CD14-positive monocyte (primary cell): ENCODE measurements at regions of chr11 and their contacts with region 1.

Region 1: GRCh38 chr11:69888483-69889076 is 69.4 kb upstream of the FGF3 start:
- DNase-seq: peak; percentile 28 to 44 (median 33)
- H3K4me3 ChIP-seq: no peak overlapping the region
- H3K4me3 Mint-ChIP-seq: no peak overlapping the region
- H3K27ac ChIP-seq: no peak overlapping the region
- H3K27ac Mint-ChIP-seq: no peak overlapping the region
- H3K4me1 ChIP-seq: no peaks in the 10 kb centered on the region
- H3K4me1 Mint-ChIP-seq: no peaks in the 10 kb centered on the region
- H3K27me3 ChIP-seq: peaks cover 0 to 7% of the 10 kb centered on the region in 2 donors
- H3K27me3 Mint-ChIP-seq: peaks cover 18 to 42% (median 26%) of the 10 kb centered on the region in 3 donors
- CTCF ChIP-seq: peak; percentile 86

Region 2: DNA sequence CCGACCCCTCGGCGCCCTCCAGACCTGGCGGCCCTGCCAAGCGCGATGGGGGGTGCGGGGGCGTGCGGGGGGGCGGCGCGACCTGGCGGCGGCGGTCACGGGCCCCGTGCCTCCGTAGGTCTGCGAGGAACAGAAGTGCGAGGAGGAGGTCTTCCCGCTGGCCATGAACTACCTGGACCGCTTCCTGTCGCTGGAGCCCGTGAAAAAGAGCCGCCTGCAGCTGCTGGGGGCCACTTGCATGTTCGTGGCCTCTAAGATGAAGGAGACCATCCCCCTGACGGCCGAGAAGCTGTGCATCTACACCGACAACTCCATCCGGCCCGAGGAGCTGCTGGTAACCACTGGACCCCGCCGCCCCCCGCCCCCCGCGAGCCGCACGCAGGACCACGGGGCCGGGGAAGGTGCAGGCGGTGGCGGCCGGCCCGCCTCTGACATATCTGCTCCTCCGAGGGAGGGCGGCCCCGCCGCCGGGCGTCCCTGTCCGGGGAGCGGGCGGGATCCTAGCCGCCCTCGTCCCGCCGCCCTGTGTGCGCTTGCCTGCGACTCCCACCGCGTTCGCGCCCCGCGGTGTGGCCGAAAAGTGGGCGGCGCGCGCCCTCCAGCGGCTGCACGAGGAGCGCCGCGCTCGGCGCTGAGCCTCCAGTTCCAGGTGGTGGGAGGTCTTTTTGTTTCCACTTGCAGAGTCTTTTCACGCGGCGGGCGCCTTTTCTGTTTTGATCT is 245.5 kb before region 1 on chr11:
- intact Hi-C with region 1: loop called in 1 of 2 experiments (anchors 5 kb)
- DNase-seq: peak; percentile 51 to 63 (median 57)
- H3K4me3 ChIP-seq: peak overlapping the region; percentile 51 to 87 (median 53)
- H3K4me3 Mint-ChIP-seq: peak overlapping the region; percentile 77 to 84
- H3K27ac ChIP-seq: no peak overlapping the region
- H3K27ac Mint-ChIP-seq: no peak overlapping the region
- H3K4me1 ChIP-seq: peaks cover 31 to 41% of the 10 kb centered on the region in 2 donors
- H3K4me1 Mint-ChIP-seq: peaks cover 23% of the 10 kb centered on the region
- H3K27me3 ChIP-seq: peaks cover 25 to 55% of the 10 kb centered on the region in 2 donors
- H3K27me3 Mint-ChIP-seq: peaks cover 45 to 69% (median 45%) of the 10 kb centered on the region in 3 donors
- CTCF ChIP-seq: peak; percentile 97

Region 3: GRCh38 chr11:69683764-69684333 is 204.7 kb before region 1 on chr11:
- intact Hi-C with region 1: loop called in 1 of 2 experiments (anchors 1 kb)
- DNase-seq: no peak
- H3K4me3 ChIP-seq: no peak overlapping the region
- H3K4me3 Mint-ChIP-seq: no peak overlapping the region
- H3K27ac ChIP-seq: no peak overlapping the region
- H3K27ac Mint-ChIP-seq: no peak overlapping the region
- H3K4me1 ChIP-seq: peaks cover 3 to 4% of the 10 kb centered on the region in 2 donors
- H3K4me1 Mint-ChIP-seq: peaks cover 8% of the 10 kb centered on the region
- H3K27me3 ChIP-seq: peaks cover 4 to 21% of the 10 kb centered on the region in 2 donors
- H3K27me3 Mint-ChIP-seq: peaks cover 27 to 43% (median 35%) of the 10 kb centered on the region in 3 donors
- CTCF ChIP-seq: peak; percentile 10

Region 4: GRCh38 chr11:69692422-69692821 is 196.2 kb before region 1 on chr11:
- intact Hi-C with region 1: loop called in 1 of 2 experiments (anchors 2 kb)
- DNase-seq: no peak
- H3K4me3 ChIP-seq: no peak overlapping the region
- H3K4me3 Mint-ChIP-seq: no peak overlapping the region
- H3K27ac ChIP-seq: no peak overlapping the region
- H3K27ac Mint-ChIP-seq: no peak overlapping the region
- H3K4me1 ChIP-seq: no peaks in the 10 kb centered on the region
- H3K4me1 Mint-ChIP-seq: no peaks in the 10 kb centered on the region
- H3K27me3 ChIP-seq: no peaks in the 10 kb centered on the region
- H3K27me3 Mint-ChIP-seq: peaks cover 4 to 55% (median 21%) of the 10 kb centered on the region in 3 donors
- CTCF ChIP-seq: no peak